ENCODE measurements at regions of chr3 and their contacts with region 1.

Region 1: DNA sequence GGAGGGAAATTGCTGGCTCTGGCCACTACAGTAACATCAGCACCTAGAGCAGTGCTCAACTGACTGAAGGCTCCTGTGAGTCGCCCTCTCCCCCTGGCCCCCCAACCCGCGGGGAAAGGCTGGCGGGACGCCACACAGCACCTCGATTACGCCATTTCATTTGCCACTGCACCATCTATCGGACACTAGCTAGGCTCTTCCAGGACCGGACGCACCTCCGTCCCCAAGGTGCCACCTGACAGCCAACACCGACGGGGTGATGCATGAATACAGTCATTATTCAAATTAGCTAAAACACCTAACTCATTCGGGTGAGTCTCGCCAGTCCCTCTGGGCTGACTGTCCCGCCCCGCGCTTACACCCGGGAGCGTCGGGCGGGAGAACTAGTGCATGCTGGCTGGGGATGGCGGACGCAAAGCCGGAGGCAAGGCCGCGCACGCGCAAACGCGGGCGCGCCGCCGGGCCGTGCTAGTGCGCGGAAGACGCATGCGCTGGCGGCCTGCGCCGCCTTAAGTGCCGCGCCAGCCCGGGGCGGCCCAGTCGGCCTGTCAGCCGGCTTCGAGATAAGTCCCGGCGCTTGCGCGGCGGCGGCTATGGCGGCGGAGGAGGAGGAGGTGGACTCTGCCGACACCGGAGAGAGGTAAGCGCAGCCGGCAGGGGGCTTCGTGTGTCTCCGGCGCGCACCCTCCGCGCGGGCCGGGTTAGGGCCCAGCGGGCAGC is at the start of gene ABHD5:
- DNase-seq: peak; percentile 96
- H3K4me3 ChIP-seq: peak within 1 kb of the TSS; percentile 75 to 97 (median 94)
- H3K27ac ChIP-seq: peak within 1 kb of the TSS; percentile 95 to 98 (median 96)
- H3K4me1 ChIP-seq: peaks cover 16 to 48% (median 33%) of the 10 kb centered on the region in 4 donors
- H3K27me3 ChIP-seq: no peaks in the 10 kb centered on the region
- CTCF ChIP-seq: peak; percentile 19 to 28 (median 27)
- EP300 ChIP-seq: no peak
- POLR2A ChIP-seq: peak; percentile 99
- total RNA-seq, gene ABHD5: 22.3 to 40.3 (median 31.4) TPM

Region 2: DNA sequence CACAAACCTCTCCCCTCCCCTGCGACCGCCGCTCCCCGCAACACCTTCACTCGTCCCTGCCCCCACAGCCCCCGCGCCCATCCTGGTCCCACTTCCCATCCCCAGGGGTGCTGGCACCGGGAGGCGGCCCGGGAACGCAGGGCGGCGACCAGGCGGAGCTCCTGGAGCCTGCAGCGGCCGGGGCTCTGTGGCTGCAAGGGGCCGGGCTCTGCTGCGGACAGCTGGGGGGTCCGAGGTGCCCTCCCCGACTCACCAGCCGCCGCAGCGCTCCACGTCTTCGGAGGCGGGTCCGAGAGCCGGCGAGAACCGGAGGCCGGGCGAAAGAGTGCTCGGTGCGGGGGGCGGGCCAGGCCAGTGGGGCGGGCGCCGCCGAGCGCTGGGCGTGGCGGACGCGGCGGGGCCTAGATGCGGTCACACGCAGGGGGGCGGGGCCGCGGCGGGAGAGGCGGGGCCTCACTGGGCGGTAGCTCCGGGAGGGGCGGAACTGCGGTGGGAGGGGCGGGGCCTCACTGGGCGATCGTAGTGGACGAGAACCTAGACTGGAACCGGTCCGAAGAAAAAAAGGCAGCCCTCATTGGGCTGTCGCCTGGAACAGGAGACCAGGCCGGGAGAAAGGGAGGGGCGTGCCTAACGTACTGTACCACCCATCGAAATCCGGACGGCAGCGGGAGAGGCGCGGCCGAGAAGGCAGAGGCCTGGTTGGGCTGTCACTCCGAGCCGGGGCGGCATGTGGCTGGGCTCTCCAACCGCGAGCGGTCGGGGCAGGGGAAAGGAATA is 68.7 kb before region 1 on chr3 and contains the start of gene ANO10:
- intact Hi-C with region 1: loop called (anchors 2 kb)
- DNase-seq: peak; percentile 99
- H3K4me3 ChIP-seq: peak within 1 kb of the TSS; percentile 71 to 92 (median 89)
- H3K27ac ChIP-seq: peak within 1 kb of the TSS; percentile 88 to 95 (median 90)
- H3K4me1 ChIP-seq: peaks cover 12 to 19% (median 17%) of the 10 kb centered on the region in 4 donors
- H3K27me3 ChIP-seq: no peaks in the 10 kb centered on the region
- CTCF ChIP-seq: no peak
- EP300 ChIP-seq: no peak
- POLR2A ChIP-seq: no peak
- total RNA-seq, gene ANO10: 19.2 to 26.2 (median 24.0) TPM

Region 3: DNA sequence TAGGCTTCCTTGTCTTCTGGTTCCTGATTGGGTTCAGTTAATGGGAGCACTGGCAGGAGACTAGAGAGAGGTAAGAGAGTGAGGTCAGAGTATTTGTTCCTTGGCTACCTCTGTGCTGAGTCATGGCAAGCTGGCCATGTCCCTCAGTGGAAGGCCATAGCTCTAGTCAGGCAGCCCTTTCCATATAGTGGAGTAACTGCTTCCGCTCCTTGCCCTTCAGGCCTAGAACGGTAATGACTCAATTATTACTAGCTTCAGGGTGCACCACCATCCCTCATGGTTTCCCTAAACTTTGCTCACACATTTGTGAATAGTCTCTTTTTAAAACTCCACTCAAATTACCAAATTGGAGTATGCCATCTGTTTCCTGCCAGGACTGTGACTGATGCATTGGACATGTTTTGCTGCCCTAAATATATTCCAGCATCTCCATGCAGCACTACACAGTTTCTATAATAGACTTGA is 58.3 kb before region 1 on chr3:
- intact Hi-C with region 1: loop called (anchors 2 kb)
- DNase-seq: no peak
- H3K4me3 ChIP-seq: no peak overlapping the region
- H3K27ac ChIP-seq: no peak overlapping the region
- H3K4me1 ChIP-seq: no peaks in the 10 kb centered on the region
- H3K27me3 ChIP-seq: no peaks in the 10 kb centered on the region
- CTCF ChIP-seq: no peak
- EP300 ChIP-seq: no peak
- POLR2A ChIP-seq: no peak

Measured in esophagus muscularis mucosa (tissue), 4 donors.